HEK293 (cell line): ENCODE measurements at regions of chr16 and their contacts with region 1.

Region 1: GRCh38 chr16:69123910-69124309 is 8.5 kb downstream of the CHTF8 start:
- H3K4me3 ChIP-seq: no peak overlapping the region
- H3K27ac ChIP-seq: no peak overlapping the region
- H3K4me1 ChIP-seq: no peaks in the 10 kb centered on the region
- CTCF ChIP-seq: no peak

Region 2: DNA sequence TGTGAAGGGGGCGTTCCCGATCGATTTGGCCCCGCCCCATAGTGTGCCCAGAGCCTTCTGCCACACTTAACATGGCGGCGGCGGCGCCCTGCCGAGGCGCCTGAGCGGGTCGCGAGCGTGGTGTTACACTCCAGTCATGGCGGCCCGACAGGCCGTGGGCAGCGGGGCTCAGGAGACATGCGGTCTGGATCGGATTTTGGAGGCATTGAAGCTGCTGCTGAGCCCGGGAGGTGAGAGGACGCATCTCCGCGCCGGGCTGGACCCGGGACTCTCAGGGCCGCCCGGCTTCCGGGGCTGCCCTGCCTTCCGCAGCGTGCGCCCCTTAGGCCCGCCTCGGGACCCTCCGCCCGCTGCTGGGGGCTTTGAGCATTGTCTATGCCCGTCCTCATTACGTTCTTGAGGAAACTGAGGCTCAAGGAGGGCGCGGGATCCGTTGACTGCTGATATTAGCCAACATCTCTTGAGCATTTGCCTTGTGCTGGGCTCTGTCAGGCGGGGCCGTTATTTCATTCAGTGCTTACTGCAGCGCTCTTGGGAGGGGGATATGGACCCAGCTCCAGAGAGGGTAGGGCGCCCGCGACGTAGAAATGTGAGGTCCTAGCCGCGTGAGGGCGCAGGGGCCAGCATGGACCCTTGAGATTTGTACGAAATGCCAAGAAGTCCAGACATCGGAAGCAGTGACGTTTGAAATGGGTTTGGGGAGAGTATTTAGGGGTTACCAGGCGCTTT is 280.3 kb before region 1 on chr16 and contains the start of gene TANGO6:
- CTCF ChIA-PET with region 1: interaction called, 28 read pairs
- POLR2A ChIA-PET with region 1: interaction called, 3 read pairs
- H3K4me3 ChIP-seq: peak within 1 kb of the TSS; percentile 94
- H3K27ac ChIP-seq: peak within 1 kb of the TSS; percentile 67; the same call in 1 of the 2 replicates
- H3K4me1 ChIP-seq: no peaks in the 10 kb centered on the region
- CTCF ChIP-seq: peak; percentile 68; the same call in 1 of the 2 replicates

Region 3: DNA sequence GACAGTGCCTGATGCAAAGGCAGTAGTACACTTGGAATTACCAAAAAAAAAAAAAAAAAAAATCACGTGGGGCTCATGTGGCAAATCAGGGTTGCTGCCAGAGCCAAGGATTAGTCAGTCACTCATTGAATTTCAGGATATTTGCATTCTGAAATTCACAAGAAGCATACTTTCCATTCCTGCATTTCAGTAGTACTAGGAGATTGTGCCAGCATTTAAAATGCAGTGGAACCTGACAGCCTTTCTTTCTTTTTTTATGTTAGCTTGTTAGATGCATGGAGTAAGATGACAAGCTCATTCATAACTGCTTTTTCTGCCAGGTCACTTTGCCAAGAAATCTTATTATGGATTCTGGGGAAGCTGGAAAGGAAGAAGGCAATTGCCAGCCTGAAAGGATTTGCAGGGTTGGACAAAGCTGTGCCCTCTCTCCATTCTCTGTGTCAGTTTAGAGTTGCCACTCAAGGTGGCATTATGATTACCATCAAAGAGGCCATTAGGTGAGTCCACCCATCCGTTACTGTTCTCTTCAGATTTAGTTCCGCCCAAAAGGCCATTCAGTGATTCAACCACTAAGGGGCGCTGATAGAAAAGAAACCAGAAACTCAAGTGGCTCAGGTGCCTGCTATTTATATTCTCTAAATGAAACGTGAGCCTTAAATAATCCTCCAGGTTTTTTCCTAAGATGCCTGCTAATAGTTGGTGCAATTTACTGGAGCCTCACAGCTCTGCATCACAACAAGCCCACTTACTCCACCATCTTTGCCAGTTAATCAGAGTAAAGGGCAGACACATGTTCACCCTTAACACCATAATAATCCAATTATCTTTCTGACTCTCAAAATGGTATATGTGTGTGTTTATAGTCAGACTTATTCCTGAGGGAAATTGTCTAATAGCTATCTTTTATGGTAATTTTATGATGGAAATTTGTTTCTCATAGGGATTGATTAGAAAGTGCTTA is 221.6 kb before region 1 on chr16:
- CTCF ChIA-PET with region 1: interaction called, 51 read pairs
- POLR2A ChIA-PET with region 1: interaction called, 5 read pairs
- H3K4me3 ChIP-seq: no peak overlapping the region
- H3K27ac ChIP-seq: no peak overlapping the region
- H3K4me1 ChIP-seq: no peaks in the 10 kb centered on the region
- CTCF ChIP-seq: 0 out of 2 replicates have a peak, but pooled peaks have one; percentile 20

Region 4: GRCh38 chr16:68995011-68995504 is 128.9 kb before region 1 on chr16:
- CTCF ChIA-PET with region 1: no interaction called
- POLR2A ChIA-PET with region 1: no interaction called
- H3K4me3 ChIP-seq: no peak overlapping the region
- H3K27ac ChIP-seq: no peak overlapping the region
- H3K4me1 ChIP-seq: no peaks in the 10 kb centered on the region
- CTCF ChIP-seq: peak; percentile 37; the same call in 1 of the 2 replicates

Region 5: GRCh38 chr16:69083329-69083941 is 40.5 kb before region 1 on chr16:
- CTCF ChIA-PET with region 1: interaction called, 10 read pairs
- POLR2A ChIA-PET with region 1: no interaction called
- H3K4me3 ChIP-seq: no peak overlapping the region
- H3K27ac ChIP-seq: no peak overlapping the region
- H3K4me1 ChIP-seq: no peaks in the 10 kb centered on the region
- CTCF ChIP-seq: no peak

Region 6: GRCh38 chr16:69112285-69113129 is 11.4 kb before region 1 on chr16:
- CTCF ChIA-PET with region 1: interaction called, 57 read pairs
- POLR2A ChIA-PET with region 1: no interaction called
- H3K4me3 ChIP-seq: no peak overlapping the region
- H3K27ac ChIP-seq: no peak overlapping the region
- H3K4me1 ChIP-seq: no peaks in the 10 kb centered on the region
- CTCF ChIP-seq: peak; percentile 69

Region 7: GRCh38 chr16:69150146-69150865 is 26.4 kb after region 1 on chr16:
- CTCF ChIA-PET with region 1: no interaction called
- POLR2A ChIA-PET with region 1: no interaction called
- H3K4me3 ChIP-seq: no peak overlapping the region
- H3K27ac ChIP-seq: no peak overlapping the region
- H3K4me1 ChIP-seq: no peaks in the 10 kb centered on the region
- CTCF ChIP-seq: peak; percentile 67; the same call in 1 of the 2 replicates